Ovary (tissue), 10 donors: ENCODE measurements at regions of chr1 and their contacts with region 1.

Region 1: DNA sequence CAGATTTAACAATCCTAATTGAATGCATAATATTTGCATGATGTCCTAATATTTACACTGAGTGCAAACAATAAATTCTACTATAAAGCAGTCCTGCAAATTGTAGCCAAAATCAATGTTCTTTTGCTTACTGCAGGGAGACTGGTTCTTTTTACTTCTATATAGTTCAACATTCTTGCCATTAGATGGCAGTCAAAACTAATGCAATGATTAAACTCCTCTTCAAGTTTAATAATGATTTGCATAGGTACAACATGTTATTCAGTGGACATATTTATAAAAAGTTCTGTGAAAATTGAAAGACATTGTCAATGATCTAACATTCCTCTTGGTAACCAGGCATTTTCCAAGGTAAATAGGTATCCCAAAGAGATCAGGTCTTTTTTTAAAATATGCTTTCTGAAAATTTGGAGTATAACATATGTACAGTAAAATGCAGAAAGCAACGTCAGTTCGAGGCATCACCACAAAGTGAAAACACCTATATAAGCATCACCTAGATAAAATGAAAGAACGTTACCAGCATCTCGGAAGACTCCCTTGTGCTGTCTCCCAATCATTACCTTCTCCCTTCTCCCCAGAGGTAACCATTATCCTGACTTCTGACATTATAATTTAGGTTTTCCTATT is 9.8 kb upstream of the FNBP1L start:
- DNase-seq: no peak
- H3K4me3 ChIP-seq: no peak overlapping the region
- H3K27ac ChIP-seq: no peak overlapping the region
- H3K4me1 ChIP-seq: no peaks in the 10 kb centered on the region
- H3K27me3 ChIP-seq: no peaks in the 10 kb centered on the region
- CTCF ChIP-seq: peak; percentile 35 to 68 (median 48)
- EP300 ChIP-seq: no peak
- POLR2A ChIP-seq: no peak

Region 2: GRCh38 chr1:93123201-93123783 is 314.8 kb before region 1 on chr1:
- intact Hi-C with region 1: no loop called
- DNase-seq: no peak
- H3K4me3 ChIP-seq: no peak overlapping the region
- H3K27ac ChIP-seq: no peak overlapping the region
- H3K4me1 ChIP-seq: no peaks in the 10 kb centered on the region
- H3K27me3 ChIP-seq: no peaks in the 10 kb centered on the region
- CTCF ChIP-seq: no peak
- EP300 ChIP-seq: no peak
- POLR2A ChIP-seq: no peak

Region 3: DNA sequence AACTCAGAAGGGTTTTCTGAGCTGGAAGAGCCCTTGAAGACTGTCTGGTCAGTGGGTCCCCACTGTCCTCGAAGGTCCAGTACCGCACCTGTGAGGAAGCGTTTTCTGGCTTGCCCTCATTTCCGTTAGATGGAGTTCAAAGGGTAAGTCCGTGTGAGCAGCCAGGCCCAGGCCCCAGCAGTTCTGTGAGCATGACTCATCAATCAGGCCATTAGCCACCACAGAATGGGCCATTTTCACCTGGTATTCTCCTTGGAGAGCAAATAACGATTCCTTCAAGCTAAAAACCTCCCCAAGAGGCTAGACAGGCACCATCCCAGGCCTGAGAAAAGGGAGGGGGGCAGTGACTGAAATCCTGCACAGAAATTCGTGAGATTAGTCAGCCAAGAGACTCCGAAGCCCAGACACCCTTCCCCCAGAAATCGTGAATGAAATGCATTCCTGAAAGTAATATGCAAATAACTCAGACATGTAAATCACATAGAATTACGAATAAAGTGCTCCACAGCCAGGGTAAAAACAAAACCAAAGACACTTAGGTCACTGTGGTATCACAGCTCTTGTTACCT is 177.6 kb after region 1 on chr1:
- intact Hi-C with region 1: loop called in 2 of 4 experiments (anchors 10 kb)
- DNase-seq: no peak
- H3K4me3 ChIP-seq: no peak overlapping the region
- H3K27ac ChIP-seq: no peak overlapping the region
- H3K4me1 ChIP-seq: peaks cover 5% of the 10 kb centered on the region
- H3K27me3 ChIP-seq: no peaks in the 10 kb centered on the region
- CTCF ChIP-seq: no peak
- EP300 ChIP-seq: no peak
- POLR2A ChIP-seq: no peak

Region 4: DNA sequence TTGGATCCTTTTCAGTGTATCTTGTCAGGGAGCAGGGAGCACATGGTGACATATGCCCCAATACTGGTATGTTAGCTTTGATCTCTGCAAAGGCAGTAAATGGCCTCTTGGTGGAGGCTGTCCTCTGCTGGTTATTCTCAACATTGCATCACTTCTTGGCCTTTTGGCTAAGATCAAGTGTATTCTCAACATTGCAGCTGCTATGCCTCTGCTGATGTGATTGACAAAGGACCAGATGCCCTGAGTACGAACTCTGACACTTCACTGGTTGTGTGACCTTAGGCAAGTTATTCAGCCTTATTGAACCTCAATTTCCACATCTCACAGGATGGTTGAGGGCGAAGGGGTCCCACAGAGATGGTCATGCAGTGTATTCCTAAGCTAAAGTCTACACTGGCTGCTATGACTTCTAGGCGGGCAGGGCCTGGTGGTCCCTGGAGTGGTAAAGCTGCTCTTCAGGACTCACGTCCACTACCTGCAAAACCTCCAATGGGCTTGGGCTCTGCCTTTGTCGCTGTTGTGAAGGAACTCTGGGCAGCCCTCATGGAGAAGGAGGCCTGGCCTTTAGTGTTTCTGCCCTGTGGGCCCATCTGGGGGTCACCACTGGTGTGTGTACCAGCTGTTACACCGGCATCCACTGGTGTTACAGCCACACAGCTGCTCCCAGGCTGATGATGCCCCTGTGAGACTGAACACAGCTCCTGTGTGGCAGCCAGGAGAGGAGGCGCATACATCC is 376.1 kb after region 1 on chr1:
- intact Hi-C with region 1: loop called in 2 of 4 experiments (anchors 10 kb)
- DNase-seq: peak; percentile 32 to 67 (median 39)
- H3K4me3 ChIP-seq: no peak overlapping the region
- H3K27ac ChIP-seq: no peak overlapping the region
- H3K4me1 ChIP-seq: peaks cover 2% of the 10 kb centered on the region
- H3K27me3 ChIP-seq: no peaks in the 10 kb centered on the region
- CTCF ChIP-seq: peak; percentile 86 to 93 (median 92)
- EP300 ChIP-seq: no peak
- POLR2A ChIP-seq: no peak

Region 5: GRCh38 chr1:93846211-93846991 is 408.3 kb after region 1 on chr1:
- intact Hi-C with region 1: loop called in 3 of 4 experiments (anchors 10 kb)
- DNase-seq: peak; percentile 86 to 91 (median 89)
- H3K4me3 ChIP-seq: peak overlapping the region; percentile 88
- H3K27ac ChIP-seq: peak overlapping the region; percentile 97 to 99
- H3K4me1 ChIP-seq: peaks cover 4% of the 10 kb centered on the region
- H3K27me3 ChIP-seq: no peaks in the 10 kb centered on the region
- CTCF ChIP-seq: peak in 2 of 3 donors; percentile 20 to 37
- EP300 ChIP-seq: no peak
- POLR2A ChIP-seq: peak; percentile 77